ENCODE measurements at regions of chr1 and their contacts with region 1.

Region 1: DNA sequence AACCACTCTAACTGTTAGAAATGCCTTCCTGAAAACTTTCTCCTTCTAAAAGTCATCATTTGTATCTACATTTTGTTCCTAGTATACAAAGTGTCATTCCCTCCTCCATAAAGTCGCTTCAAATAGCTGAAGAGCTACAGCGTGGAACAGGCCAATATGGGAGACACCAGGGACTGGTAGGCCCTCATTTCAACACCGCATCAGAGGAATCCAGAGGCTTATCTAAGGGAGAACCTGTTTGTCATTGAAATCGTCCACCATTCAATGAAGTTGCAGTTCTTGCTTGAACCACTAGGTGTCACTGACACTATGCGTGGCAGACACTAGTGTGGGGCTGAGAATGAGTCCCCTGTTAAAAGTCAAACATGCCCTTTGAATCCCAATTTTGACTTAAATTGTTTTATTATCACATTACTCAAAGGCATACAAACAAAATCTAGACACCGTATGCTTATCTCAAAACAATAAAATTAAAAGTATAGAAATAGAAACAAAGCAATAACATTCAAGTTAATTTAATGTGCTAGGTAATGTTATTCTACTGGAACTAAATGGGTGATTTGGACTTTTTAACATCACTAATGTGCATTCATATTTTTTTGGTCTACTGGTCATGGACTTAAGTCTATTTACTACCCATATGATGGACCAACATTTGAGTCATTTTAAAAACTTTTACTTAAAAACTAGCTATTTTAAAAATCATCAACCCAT is 182.3 kb downstream of the FCRL5 start:
- DNase-seq: no peak
- ATAC-seq: peak; percentile 77
- H3K4me3 Mint-ChIP-seq: no peak overlapping the region
- H3K27ac Mint-ChIP-seq: no peak overlapping the region
- H3K4me1 Mint-ChIP-seq: no peaks in the 10 kb centered on the region
- H3K27me3 Mint-ChIP-seq: no peaks in the 10 kb centered on the region
- CTCF ChIP-seq: peak; percentile 96

Region 2: DNA sequence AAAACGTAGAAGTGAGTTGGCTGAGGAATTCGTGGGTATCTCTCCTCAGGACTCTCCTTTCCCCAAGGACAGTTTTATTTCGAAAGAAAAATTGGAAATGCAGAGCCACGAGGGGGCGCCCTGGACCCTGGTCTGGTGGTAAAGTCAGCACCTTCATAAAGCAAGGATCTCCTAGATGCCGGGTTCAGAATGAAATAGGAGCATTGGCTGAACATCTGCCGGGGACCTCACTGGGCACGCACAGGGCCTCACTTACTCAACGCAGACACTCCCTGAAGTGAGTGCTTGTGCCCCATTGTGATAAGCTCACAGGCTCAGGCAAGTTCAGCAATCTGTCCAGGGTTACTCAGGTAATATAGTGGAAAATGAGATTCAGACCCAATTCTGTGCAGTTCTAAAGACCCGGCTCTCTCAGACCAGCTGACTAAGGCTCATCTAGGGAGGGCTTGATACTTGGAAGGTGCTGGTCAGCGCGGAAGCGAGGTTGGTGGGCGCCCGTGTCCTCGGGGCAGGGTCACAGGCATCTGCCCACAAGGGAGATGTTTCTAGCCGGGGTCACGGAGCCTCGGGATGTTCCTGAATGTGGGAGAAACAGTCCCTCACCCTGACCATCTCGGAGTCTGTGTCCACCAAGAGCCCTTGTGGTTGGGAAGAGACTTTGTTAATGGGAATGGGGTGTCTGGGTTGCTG is 176.1 kb before region 1 on chr1:
- CTCF ChIA-PET with region 1: interaction called, 4 read pairs
- POLR2A ChIA-PET with region 1: no interaction called
- intact Hi-C with region 1: loop called (anchors 10 kb)
- DNase-seq: peak; percentile 55
- ATAC-seq: peak; percentile 25
- H3K4me3 Mint-ChIP-seq: no peak overlapping the region
- H3K27ac Mint-ChIP-seq: no peak overlapping the region
- H3K4me1 Mint-ChIP-seq: peaks cover 4% of the 10 kb centered on the region
- H3K27me3 Mint-ChIP-seq: peaks cover 30% of the 10 kb centered on the region
- CTCF ChIP-seq: no peak

Region 3: GRCh38 chr1:158087320-158087927 is 717.5 kb after region 1 on chr1:
- CTCF ChIA-PET with region 1: no interaction called
- POLR2A ChIA-PET with region 1: no interaction called
- intact Hi-C with region 1: loop called (anchors 1 kb)
- DNase-seq: no peak
- ATAC-seq: peak; percentile 70
- H3K4me3 Mint-ChIP-seq: no peak overlapping the region
- H3K27ac Mint-ChIP-seq: no peak overlapping the region
- H3K4me1 Mint-ChIP-seq: no peaks in the 10 kb centered on the region
- H3K27me3 Mint-ChIP-seq: peaks cover 8% of the 10 kb centered on the region
- CTCF ChIP-seq: no peak